ENCODE measurements at regions of chr12 and their contacts with region 1.

Region 1: DNA sequence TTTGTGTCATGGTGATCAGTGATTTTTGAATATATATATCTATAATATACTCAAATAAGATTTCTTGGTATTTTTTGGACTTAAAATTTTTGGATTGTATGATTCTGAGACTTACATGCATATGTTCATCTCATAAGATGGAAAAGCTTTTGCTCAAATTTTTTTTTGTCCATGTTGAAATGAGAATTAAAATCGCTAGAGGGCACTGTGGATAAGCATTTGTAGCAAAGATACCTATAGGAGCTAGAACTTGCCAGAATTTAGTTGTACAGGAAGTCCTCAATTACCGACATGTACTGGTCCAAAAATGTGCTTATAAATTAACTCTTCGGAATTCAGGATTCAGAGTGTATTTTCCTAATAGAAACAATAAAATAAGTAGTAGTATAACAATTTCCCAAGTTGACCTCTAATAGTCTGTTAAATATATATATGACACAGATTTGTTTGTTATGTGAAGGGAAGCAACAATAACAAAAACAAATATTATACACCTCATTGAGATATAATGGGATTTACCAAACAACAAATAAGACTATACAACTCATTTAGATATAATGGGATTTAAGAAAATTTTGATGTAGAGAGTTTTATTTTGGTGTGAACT is 179.6 kb downstream of the TMEM117 start:
- DNase-seq: peak in 3 of 14 experiments; percentile 55 to 63 (median 59)
- ATAC-seq: peak; percentile 49
- H3K4me3 ChIP-seq: no peak overlapping the region
- H3K4me3 Mint-ChIP-seq: no peak overlapping the region
- H3K27ac ChIP-seq: no peak overlapping the region
- H3K27ac Mint-ChIP-seq: no peak overlapping the region
- H3K4me1 ChIP-seq: no peaks in the 10 kb centered on the region
- H3K4me1 Mint-ChIP-seq: peaks cover 4% of the 10 kb centered on the region
- H3K27me3 ChIP-seq: no peaks in the 10 kb centered on the region
- H3K27me3 Mint-ChIP-seq: no peaks in the 10 kb centered on the region
- CTCF ChIP-seq: peak; percentile 69

Region 2: GRCh38 chr12:43976027-43976426 is 39.4 kb before region 1 on chr12:
- CTCF ChIA-PET with region 1: no interaction called
- POLR2A ChIA-PET with region 1: no interaction called
- intact Hi-C with region 1: no loop called
- DNase-seq: no peak
- ATAC-seq: no peak
- H3K4me3 ChIP-seq: no peak overlapping the region
- H3K4me3 Mint-ChIP-seq: no peak overlapping the region
- H3K27ac ChIP-seq: no peak overlapping the region
- H3K27ac Mint-ChIP-seq: no peak overlapping the region
- H3K4me1 ChIP-seq: no peaks in the 10 kb centered on the region
- H3K4me1 Mint-ChIP-seq: no peaks in the 10 kb centered on the region
- H3K27me3 ChIP-seq: no peaks in the 10 kb centered on the region
- H3K27me3 Mint-ChIP-seq: no peaks in the 10 kb centered on the region
- CTCF ChIP-seq: no peak

Region 3: DNA sequence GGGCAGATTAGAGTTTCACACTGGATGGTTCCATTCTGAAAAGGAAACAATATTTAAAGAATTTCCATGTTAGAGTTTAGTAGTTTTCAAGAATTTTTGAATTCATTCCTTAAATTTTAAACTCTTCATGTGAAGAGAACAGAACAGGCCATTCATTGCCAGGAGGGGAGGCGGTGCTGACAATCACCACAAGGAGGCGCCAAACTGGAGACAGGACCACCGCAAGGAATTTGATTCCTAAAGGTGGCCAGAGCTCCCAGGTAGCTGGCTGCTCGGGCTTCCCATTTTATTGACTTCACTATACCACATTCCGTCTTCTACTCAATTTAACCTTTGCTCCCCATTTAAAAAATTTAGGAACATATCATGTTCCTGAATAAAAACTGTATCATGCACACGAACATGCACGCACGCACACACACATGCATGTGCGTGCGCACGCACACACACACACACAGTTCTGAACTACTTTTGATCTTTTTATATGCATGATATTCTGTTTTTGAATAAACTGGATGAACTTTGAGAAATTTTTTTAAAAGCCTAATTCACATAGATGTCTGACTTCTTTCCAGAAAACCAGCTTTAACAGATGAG is 759.5 kb after region 1 on chr12:
- CTCF ChIA-PET with region 1: no interaction called
- POLR2A ChIA-PET with region 1: no interaction called
- intact Hi-C with region 1: loop called (anchors 5 to 10 kb)
- DNase-seq: peak; percentile 43 to 78 (median 56)
- ATAC-seq: no peak
- H3K4me3 ChIP-seq: no peak overlapping the region
- H3K4me3 Mint-ChIP-seq: no peak overlapping the region
- H3K27ac ChIP-seq: no peak overlapping the region
- H3K27ac Mint-ChIP-seq: no peak overlapping the region
- H3K4me1 ChIP-seq: no peaks in the 10 kb centered on the region
- H3K4me1 Mint-ChIP-seq: peaks cover 4% of the 10 kb centered on the region
- H3K27me3 ChIP-seq: no peaks in the 10 kb centered on the region
- H3K27me3 Mint-ChIP-seq: no peaks in the 10 kb centered on the region
- CTCF ChIP-seq: peak; percentile 91

Region 4: DNA sequence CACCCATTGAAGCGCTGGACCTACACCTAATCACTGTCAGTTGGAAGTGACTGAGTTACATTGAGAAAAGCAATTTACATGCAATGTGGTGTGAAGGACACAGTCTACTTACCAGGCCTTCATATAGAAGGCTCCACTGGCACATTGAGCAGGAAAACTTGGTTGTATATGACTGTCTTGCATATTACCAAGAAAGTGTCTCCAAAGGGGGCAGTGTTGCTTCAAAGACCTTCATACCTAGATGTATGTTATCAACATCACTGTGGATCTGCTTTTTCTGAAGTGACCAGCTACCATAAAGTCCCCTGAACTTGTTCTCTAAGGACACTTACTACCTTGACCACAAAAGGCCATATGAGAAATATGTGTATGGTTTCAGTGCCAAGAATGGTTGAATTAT is 796.6 kb after region 1 on chr12:
- CTCF ChIA-PET with region 1: no interaction called
- POLR2A ChIA-PET with region 1: no interaction called
- intact Hi-C with region 1: loop called in 1 of 2 experiments (anchors 5 kb)
- DNase-seq: peak in 10 of 14 experiments; percentile 14 to 81 (median 38)
- ATAC-seq: peak; percentile 86
- H3K4me3 ChIP-seq: no peak overlapping the region
- H3K4me3 Mint-ChIP-seq: no peak overlapping the region
- H3K27ac ChIP-seq: no peak overlapping the region
- H3K27ac Mint-ChIP-seq: no peak overlapping the region
- H3K4me1 ChIP-seq: peaks cover 7% of the 10 kb centered on the region
- H3K4me1 Mint-ChIP-seq: peaks cover 47% of the 10 kb centered on the region
- H3K27me3 ChIP-seq: no peaks in the 10 kb centered on the region
- H3K27me3 Mint-ChIP-seq: no peaks in the 10 kb centered on the region
- CTCF ChIP-seq: peak; percentile 68

Region 5: GRCh38 chr12:44947163-44947562 is 931.7 kb after region 1 on chr12:
- CTCF ChIA-PET with region 1: interaction called, 14 read pairs
- POLR2A ChIA-PET with region 1: no interaction called
- intact Hi-C with region 1: loop called (anchors 1 to 5 kb)
- DNase-seq: no peak
- ATAC-seq: no peak
- H3K4me3 ChIP-seq: no peak overlapping the region
- H3K4me3 Mint-ChIP-seq: no peak overlapping the region
- H3K27ac ChIP-seq: no peak overlapping the region
- H3K27ac Mint-ChIP-seq: no peak overlapping the region
- H3K4me1 ChIP-seq: peaks cover 5% of the 10 kb centered on the region
- H3K4me1 Mint-ChIP-seq: peaks cover 4% of the 10 kb centered on the region
- H3K27me3 ChIP-seq: no peaks in the 10 kb centered on the region
- H3K27me3 Mint-ChIP-seq: peaks cover 28% of the 10 kb centered on the region
- CTCF ChIP-seq: no peak